ENCODE measurements at regions of chr5 and their contacts with region 1.

Region 1: DNA sequence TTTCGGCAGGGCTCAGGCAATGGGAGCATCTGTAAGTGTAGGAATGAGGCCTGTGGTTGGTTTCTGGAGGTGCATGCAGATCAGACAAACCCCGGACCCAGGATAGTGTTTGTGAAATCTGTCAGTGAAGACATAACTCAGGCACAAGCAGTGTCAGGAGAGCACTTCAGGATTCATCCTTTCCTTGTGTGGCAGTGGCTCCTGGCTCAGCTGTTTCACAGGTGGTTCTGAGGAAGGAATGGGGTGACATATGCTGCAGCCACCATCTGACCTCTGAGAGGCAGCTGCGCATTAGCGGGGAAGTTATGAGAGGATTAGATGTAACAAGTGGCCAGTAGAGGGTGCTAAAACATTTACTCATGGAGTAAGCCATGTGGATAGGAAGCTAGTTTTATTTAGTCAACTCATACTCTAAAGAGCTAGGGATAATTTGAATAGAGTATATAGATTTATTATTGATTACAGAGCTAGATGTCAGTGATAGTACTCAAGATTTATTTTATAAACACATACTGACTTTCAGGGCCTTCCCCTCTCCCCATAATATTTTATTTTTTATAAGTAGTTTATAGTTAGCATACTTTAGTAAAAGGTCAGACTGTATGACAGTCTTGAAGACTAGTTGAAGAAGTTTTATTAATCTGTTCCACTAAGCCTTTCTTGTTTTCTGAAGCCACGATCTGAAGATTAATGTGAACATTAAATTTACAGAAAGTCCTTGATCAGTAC is 28.4 kb downstream of the NNT start:
- DNase-seq: peak; percentile 60
- H3K4me3 ChIP-seq: no peak overlapping the region
- H3K27ac ChIP-seq: no peak overlapping the region
- H3K27me3 ChIP-seq: no peaks in the 10 kb centered on the region
- CTCF ChIP-seq: peak; percentile 77

Region 2: GRCh38 chr5:43497311-43498104 is 133.8 kb before region 1 on chr5:
- CTCF ChIA-PET with region 1: no interaction called
- POLR2A ChIA-PET with region 1: no interaction called
- DNase-seq: no peak
- H3K4me3 ChIP-seq: no peak overlapping the region
- H3K27ac ChIP-seq: no peak overlapping the region
- H3K27me3 ChIP-seq: no peaks in the 10 kb centered on the region
- CTCF ChIP-seq: no peak

Region 3: GRCh38 chr5:43590700-43591099 is 40.6 kb before region 1 on chr5:
- CTCF ChIA-PET with region 1: interaction called, 12 read pairs
- POLR2A ChIA-PET with region 1: no interaction called
- DNase-seq: no peak
- H3K4me3 ChIP-seq: no peak overlapping the region
- H3K27ac ChIP-seq: no peak overlapping the region
- H3K27me3 ChIP-seq: no peaks in the 10 kb centered on the region
- CTCF ChIP-seq: no peak

Region 4: DNA sequence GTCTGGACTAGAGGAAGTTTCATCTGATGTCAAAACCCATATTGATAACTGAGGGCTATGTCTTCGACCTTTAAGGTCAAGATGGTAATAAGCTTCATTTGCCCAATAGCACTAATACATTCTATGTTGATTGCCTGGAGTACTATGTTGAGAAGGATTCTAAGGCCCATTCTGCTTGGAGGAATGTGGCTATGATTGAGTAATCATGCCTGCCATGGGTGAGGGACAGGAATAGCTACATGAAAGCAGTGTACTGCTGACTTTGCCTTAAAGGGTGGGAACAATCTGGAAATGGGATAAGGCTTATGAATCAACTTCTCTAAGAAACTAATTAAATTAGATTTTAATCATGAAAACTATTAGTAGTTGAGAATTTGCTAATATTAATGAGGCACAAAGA is 14.8 kb before region 1 on chr5:
- CTCF ChIA-PET with region 1: interaction called, 46 read pairs
- POLR2A ChIA-PET with region 1: no interaction called
- DNase-seq: no peak
- H3K4me3 ChIP-seq: no peak overlapping the region
- H3K27ac ChIP-seq: no peak overlapping the region
- H3K27me3 ChIP-seq: no peaks in the 10 kb centered on the region
- CTCF ChIP-seq: no peak

Region 5: DNA sequence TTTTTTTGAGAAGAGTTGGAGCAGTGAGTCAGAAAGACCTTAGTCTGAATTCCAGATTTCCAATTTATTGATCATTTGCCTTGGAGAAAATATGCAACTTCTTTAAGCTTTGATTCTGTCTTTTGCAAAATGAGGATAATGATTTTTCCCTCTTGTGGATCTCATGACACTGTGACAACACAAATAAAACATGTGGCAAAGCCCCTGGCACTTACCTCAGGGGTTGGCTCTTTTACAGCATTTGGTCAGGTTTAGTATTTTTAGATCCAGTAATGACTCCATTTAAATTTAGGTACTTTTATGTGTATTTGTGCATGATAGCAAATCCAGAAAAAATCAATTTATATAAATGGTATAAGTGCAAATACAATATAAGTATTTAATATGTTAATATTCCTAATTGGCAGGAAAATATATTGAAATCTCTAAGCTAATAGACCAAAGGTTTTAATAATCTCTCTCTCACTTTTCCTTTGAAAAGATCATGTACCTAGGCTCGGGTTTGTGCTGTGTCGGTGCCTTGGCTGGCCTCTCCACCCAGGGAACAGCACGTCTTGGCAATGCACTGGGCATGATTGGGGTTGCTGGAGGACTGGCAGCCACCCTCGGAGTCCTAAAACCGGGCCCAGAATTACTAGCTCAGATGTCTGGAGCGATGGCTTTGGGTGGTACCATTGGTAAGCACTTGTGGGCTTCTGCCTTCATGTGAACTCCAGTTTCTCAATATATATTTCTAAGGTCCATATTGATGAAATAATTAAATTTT is 21.4 kb after region 1 on chr5:
- CTCF ChIA-PET with region 1: interaction called, 107 read pairs
- POLR2A ChIA-PET with region 1: interaction called, 4 read pairs
- DNase-seq: no peak
- H3K4me3 ChIP-seq: no peak overlapping the region
- H3K27ac ChIP-seq: no peak overlapping the region
- H3K27me3 ChIP-seq: no peaks in the 10 kb centered on the region
- CTCF ChIP-seq: no peak

Region 6: DNA sequence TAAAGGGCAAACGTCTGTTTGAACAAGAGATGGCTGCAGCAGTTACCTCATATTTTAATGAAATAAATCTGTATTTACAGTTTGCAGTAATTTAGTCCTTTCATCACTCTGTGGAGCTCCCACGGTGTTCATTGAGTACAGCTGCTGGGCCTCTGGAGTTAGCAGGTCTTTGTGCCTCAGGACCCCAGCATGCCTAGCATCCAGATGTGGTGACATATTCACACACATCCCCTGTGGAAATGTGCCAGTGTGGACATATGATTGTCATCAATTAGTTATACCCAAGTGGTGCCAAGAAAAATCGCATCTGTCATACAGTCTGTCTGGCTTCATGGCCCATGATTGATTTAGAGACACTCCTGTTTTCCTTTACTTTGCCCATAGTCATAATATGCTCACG is 48.9 kb after region 1 on chr5:
- CTCF ChIA-PET with region 1: interaction called, 10 read pairs
- POLR2A ChIA-PET with region 1: no interaction called
- DNase-seq: no peak
- H3K4me3 ChIP-seq: no peak overlapping the region
- H3K27ac ChIP-seq: no peak overlapping the region
- H3K27me3 ChIP-seq: no peaks in the 10 kb centered on the region
- CTCF ChIP-seq: no peak

Region 7: DNA sequence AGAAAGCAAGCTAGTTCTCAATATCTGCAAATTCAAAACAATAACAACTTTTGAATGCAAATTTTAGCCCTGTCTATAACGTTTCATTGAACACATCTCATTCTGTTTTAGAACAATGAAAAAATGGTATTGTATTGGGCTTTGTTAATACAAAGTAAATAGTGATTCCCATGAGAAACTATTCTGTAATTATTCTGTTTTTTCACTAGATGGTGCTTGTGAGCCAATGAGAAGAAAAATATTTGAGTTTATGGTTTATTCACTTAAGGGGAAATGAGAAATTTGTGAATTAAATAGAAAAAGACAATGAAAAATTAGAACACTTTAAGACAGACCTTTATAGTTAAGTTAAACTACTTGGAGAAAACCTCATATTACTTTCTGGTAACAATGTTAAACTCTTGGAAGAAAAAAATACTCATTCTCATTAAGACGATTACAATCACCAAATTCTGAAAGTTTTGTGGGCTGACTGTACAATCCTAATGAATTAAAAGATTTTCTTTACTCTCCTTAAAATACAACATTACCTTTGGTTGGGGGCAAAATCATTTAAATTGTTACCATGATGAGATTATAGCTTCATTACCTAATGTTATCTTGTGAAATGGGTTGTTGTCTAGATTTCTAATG is 98.6 kb after region 1 on chr5:
- CTCF ChIA-PET with region 1: interaction called, 14 read pairs
- POLR2A ChIA-PET with region 1: no interaction called
- DNase-seq: peak; percentile 3
- H3K4me3 ChIP-seq: no peak overlapping the region
- H3K27ac ChIP-seq: no peak overlapping the region
- H3K27me3 ChIP-seq: no peaks in the 10 kb centered on the region
- CTCF ChIP-seq: peak; percentile 58

Region 8: GRCh38 chr5:44774279-44774880 is 1143.0 kb after region 1 on chr5:
- CTCF ChIA-PET with region 1: interaction called, 40 read pairs
- POLR2A ChIA-PET with region 1: no interaction called
- DNase-seq: peak; percentile 6
- H3K4me3 ChIP-seq: no peak overlapping the region
- H3K27ac ChIP-seq: no peak overlapping the region
- H3K27me3 ChIP-seq: no peaks in the 10 kb centered on the region
- CTCF ChIP-seq: peak; percentile 52

Measured in AG04450 (cell line).